Esophagus squamous epithelium (tissue), 5 donors: ENCODE measurements at regions of chr4 and their contacts with region 1.

Region 1: GRCh38 chr4:112099701-112100297 is 45.5 kb upstream of the FAM241A start:
- DNase-seq: no peak
- H3K4me3 ChIP-seq: no peak overlapping the region
- H3K27ac ChIP-seq: no peak overlapping the region
- H3K4me1 ChIP-seq: no peaks in the 10 kb centered on the region
- H3K27me3 ChIP-seq: no peaks in the 10 kb centered on the region
- CTCF ChIP-seq: peak in 5 of 6 experiments; percentile 53 to 78 (median 61)
- POLR2A ChIP-seq: no peak

Region 2: DNA sequence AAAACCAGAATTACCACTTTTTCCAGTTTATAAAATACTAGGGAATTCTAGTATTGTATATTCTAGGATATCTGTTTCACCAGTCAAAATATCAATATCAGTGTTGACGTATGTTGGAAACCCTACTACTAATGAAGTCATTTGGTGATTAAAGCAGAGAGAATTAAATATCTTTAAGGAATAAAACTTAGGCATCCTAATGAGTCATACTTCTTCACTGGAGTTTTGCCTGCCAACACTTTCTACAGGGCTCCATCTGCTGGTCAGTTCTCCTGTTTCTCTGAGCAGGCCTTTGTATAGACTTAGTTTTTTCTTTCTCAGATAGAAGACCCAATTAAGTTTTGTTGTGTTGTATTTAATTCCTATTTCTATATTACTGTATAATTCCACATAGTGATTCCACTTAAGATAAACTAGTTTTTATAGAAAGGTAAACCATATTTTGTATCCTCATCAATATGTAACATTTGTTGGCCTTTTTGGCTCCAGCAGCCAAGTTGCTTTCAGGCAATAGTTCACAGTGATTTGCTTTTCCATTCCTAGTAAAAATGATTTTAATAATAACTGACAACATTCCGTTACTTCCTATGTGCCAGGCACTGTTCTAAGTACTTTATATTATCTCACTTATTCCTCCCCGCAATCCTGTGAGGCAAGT is 135.3 kb after region 1 on chr4:
- intact Hi-C with region 1: loop called (anchors 5 kb)
- DNase-seq: no peak
- H3K4me3 ChIP-seq: no peak overlapping the region
- H3K27ac ChIP-seq: no peak overlapping the region
- H3K4me1 ChIP-seq: peaks cover 10 to 39% (median 13%) of the 10 kb centered on the region in 3 donors
- H3K27me3 ChIP-seq: no peaks in the 10 kb centered on the region
- CTCF ChIP-seq: peak; percentile 40 to 82 (median 76)
- POLR2A ChIP-seq: no peak

Region 3: DNA sequence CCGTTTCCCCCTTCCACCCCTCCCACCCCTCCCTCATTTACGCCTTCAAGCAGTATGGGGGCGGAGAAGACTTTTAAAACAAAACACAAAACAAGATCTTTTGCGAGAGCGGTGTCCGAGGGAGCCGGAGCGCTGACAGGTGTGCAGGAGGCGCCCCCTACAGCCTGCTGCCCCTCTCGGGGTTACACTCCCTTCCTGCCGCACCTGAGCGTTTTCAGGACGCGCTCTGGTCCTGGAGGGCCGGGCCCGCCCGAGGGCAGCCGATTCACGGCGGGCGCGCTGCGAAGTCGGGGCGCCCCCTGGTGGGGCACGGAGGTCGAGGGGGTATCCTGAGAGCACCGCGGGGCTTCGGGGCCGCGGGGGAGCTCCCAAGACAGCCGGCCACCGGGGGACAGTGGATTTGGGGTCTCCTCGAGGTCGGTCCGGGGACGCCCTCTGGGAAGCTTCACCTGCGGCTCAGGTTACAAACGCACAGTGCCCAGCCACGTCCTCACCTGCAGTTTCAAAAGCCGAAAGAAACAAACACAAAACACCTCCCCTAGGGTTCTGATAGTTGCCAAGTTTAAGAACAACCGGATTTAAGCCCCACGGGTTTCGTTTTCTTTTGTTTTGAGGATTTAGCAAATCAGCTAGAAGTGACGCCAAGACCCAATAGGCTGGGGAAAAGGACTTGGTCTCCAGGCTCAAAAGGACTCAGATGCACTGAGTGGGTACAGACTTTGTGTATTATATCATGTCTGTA is 424.1 kb after region 1 on chr4:
- intact Hi-C with region 1: loop called (anchors 10 kb)
- DNase-seq: no peak
- H3K4me3 ChIP-seq: peak overlapping the region; percentile 11 to 62 (median 36)
- H3K27ac ChIP-seq: no peak overlapping the region
- H3K4me1 ChIP-seq: peaks cover 0 to 36% (median 24%) of the 10 kb centered on the region in 3 donors
- H3K27me3 ChIP-seq: peaks cover 20 to 97% (median 46%) of the 10 kb centered on the region in 4 donors
- CTCF ChIP-seq: peak; percentile 37 to 67 (median 62)
- POLR2A ChIP-seq: no peak